H1 (cell line): ENCODE measurements at regions of chr6 and their contacts with region 1.

Region 1: DNA sequence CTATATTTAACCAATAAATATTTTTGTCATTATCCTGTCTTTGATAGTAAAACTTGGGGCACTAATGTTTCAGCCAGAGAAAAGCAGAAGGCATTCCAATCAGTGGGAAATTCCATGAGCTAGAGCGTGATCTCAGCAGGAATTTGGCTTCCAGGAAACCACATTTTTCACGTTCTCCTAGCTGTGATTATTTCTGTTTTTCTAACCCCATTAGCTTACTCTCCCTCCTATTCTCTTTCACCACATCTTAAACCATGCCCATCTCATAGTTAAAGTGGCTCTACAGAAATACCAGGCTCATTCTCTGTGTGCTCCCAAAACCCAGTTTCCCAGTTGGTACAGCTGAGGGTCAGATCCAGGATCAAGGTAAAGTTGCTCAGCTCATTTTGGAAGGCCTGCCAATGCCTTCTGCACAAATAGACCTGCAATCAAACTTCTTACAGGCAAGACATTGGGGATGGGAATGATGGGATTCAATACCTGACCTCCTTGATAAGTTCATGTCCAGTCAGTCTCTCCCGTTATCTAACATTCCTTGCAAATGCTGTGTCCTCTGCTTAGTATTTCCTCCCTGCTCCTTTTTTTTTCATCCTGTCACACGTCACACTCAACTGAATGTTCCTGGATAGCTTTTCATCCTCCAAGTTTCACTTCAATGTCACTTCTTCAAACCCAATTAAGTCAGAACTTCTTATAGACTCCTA is 33.1 kb upstream of the TMEM30A start:
- DNase-seq: no peak
- H3K4me3 ChIP-seq: no peak overlapping the region
- H3K27ac ChIP-seq: no peak overlapping the region
- H3K4me1 ChIP-seq: peaks cover 0 to 4% (median 1%) of the 10 kb centered on the region in 4 experiments; a peak in 3 of 7 replicates
- H3K27me3 ChIP-seq: no peaks in the 10 kb centered on the region
- CTCF ChIP-seq: no peak
- EP300 ChIP-seq: no peak
- POLR2A ChIP-seq: no peak
- RAD21 ChIP-seq: no peak

Region 2: GRCh38 chr6:75230484-75231325 is 87.0 kb before region 1 on chr6:
- CTCF ChIA-PET with region 1: no interaction called
- POLR2A ChIA-PET with region 1: no interaction called
- DNase-seq: no peak
- H3K4me3 ChIP-seq: no peak overlapping the region
- H3K27ac ChIP-seq: no peak overlapping the region
- H3K4me1 ChIP-seq: peaks cover 0 to 6% (median 4%) of the 10 kb centered on the region in 4 experiments; a peak in 3 of 7 replicates
- H3K27me3 ChIP-seq: peaks cover 0 to 1% (median 0%) of the 10 kb centered on the region in 4 experiments; a peak in 1 of 7 replicates
- CTCF ChIP-seq: peak; percentile 22 to 81 (median 49)
- EP300 ChIP-seq: no peak
- POLR2A ChIP-seq: no peak
- RAD21 ChIP-seq: peak; percentile 84 to 87

Region 3: GRCh38 chr6:75299801-75300530 is 17.7 kb before region 1 on chr6:
- CTCF ChIA-PET with region 1: interaction called, 12 read pairs
- POLR2A ChIA-PET with region 1: interaction called, 3 read pairs
- DNase-seq: no peak
- H3K4me3 ChIP-seq: no peak overlapping the region
- H3K27ac ChIP-seq: no peak overlapping the region
- H3K4me1 ChIP-seq: peaks cover 2 to 6% (median 2%) of the 10 kb centered on the region in 4 experiments; a peak in 3 of 7 replicates
- H3K27me3 ChIP-seq: no peaks in the 10 kb centered on the region
- CTCF ChIP-seq: no peak
- EP300 ChIP-seq: no peak
- POLR2A ChIP-seq: no peak
- RAD21 ChIP-seq: peak in 1 of 2 experiments; percentile 17; a peak in 1 of 4 replicates

Region 4: GRCh38 chr6:75306064-75306463 is 11.6 kb before region 1 on chr6:
- CTCF ChIA-PET with region 1: interaction called, 12 read pairs
- POLR2A ChIA-PET with region 1: no interaction called
- DNase-seq: no peak
- H3K4me3 ChIP-seq: no peak overlapping the region
- H3K27ac ChIP-seq: no peak overlapping the region
- H3K4me1 ChIP-seq: peaks cover 2 to 7% (median 5%) of the 10 kb centered on the region in 4 experiments; a peak in 4 of 7 replicates
- H3K27me3 ChIP-seq: no peaks in the 10 kb centered on the region
- CTCF ChIP-seq: no peak
- EP300 ChIP-seq: no peak
- POLR2A ChIP-seq: no peak
- RAD21 ChIP-seq: no peak

Region 5: GRCh38 chr6:75412969-75413662 is 95.5 kb after region 1 on chr6:
- CTCF ChIA-PET with region 1: no interaction called
- POLR2A ChIA-PET with region 1: no interaction called
- DNase-seq: no peak
- H3K4me3 ChIP-seq: no peak overlapping the region
- H3K27ac ChIP-seq: no peak overlapping the region
- H3K4me1 ChIP-seq: no peaks in the 10 kb centered on the region
- H3K27me3 ChIP-seq: no peaks in the 10 kb centered on the region
- CTCF ChIP-seq: no peak
- EP300 ChIP-seq: no peak
- POLR2A ChIP-seq: no peak
- RAD21 ChIP-seq: no peak